ENCODE measurements at regions of chr6 and their contacts with region 1.

Region 1: GRCh38 chr6:10429638-10430427 is 15.0 kb upstream of the TFAP2A start:
- DNase-seq: no peak
- ATAC-seq: no peak

Region 2: DNA sequence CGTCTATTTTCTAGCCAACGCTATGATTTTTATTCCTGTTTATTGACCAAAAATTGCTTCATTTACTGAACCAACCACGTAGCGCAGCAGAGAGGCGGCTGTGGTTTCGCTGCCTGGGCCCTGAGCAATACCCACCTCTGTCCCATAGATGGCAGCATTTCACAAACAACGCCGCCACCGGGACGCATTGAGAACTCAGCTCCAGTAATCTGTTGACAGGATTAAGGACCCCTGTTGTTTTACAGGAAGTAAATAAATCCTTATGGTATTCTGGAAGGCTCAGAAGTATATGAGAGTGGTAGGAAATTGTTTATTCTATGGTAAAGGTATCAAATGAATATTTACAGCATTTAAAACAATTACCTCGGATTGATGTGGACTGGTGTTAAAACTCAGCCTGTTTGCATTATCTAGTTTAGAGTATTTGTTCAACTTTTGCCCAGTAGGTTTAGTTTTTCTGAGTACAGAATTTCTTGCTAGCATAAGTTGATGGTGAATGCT is 1446.6 kb before region 1 on chr6:
- intact Hi-C with region 1: loop called (anchors 10 kb)
- DNase-seq: peak; percentile 77
- ATAC-seq: peak; percentile 67

Region 3: GRCh38 chr6:9250852-9251251 is 1179.0 kb before region 1 on chr6:
- intact Hi-C with region 1: loop called (anchors 5 kb)
- DNase-seq: no peak
- ATAC-seq: peak; percentile 57

Region 4: GRCh38 chr6:9540534-9541126 is 889.2 kb before region 1 on chr6:
- intact Hi-C with region 1: loop called (anchors 10 kb)
- DNase-seq: no peak
- ATAC-seq: no peak

Region 5: GRCh38 chr6:10343320-10343719 is 86.5 kb before region 1 on chr6:
- intact Hi-C with region 1: no loop called
- DNase-seq: no peak
- ATAC-seq: no peak

Measured in Right ventricle myocardium inferior (tissue), 1 donor.